ENCODE measurements at regions of chr6 and their contacts with region 1.

Region 1: DNA sequence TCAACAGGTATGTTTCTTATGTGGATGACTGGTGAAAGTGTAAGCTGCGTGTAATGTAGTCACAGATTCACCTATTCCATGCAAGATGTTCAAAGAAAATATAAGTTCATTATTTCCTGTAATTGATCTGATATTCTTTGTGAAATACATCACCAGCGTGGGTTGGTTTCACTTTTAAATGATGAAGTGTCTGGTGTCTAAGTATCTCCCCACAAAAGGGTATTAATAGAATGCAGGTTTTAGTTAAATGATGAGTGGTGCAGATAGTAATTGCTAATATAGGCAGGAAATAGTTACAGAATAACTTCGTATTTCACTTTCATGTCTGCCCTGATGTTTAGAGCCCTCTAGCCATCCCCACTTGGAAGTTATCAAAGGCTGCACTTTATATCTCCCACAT is 22.2 kb downstream of the PGBD1 start:
- DNase-seq: no peak
- ATAC-seq: no peak
- H3K4me3 ChIP-seq: no peak overlapping the region
- H3K27ac ChIP-seq: no peak overlapping the region
- H3K4me1 ChIP-seq: no peaks in the 10 kb centered on the region
- H3K27me3 ChIP-seq: no peaks in the 10 kb centered on the region
- CTCF ChIP-seq: no peak

Region 2: DNA sequence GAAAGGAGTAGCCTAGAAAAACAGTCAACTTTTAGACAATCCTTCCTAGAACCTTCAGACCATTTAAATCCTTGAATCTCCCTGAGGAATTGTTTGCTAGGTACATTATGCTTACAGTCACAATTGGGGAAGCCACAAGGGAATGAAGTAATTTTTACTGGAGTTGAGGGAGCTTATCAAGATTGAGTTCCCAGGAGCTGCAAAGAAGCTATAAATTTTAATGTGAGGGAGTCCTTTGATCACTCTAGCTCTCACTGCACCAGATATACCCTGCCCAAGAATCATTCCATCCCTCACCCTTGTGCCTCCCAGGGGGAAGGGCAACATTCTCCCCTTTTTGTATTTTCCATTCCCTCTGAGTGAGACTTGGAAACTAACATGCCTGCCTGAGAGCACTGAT is 235.5 kb before region 1 on chr6:
- CTCF ChIA-PET with region 1: no interaction called
- POLR2A ChIA-PET with region 1: no interaction called
- in situ Hi-C with region 1: no loop called
- intact Hi-C with region 1: no loop called
- DNase-seq: no peak
- ATAC-seq: no peak
- H3K4me3 ChIP-seq: no peak overlapping the region
- H3K27ac ChIP-seq: no peak overlapping the region
- H3K4me1 ChIP-seq: no peaks in the 10 kb centered on the region
- H3K27me3 ChIP-seq: peaks cover 43% of the 10 kb centered on the region
- CTCF ChIP-seq: no peak

Region 3: GRCh38 chr6:28281288-28282064 is 22.1 kb before region 1 on chr6 and contains the start of gene PGBD1:
- CTCF ChIA-PET with region 1: no interaction called
- POLR2A ChIA-PET with region 1: interaction called, 17 read pairs
- in situ Hi-C with region 1: no loop called
- intact Hi-C with region 1: no loop called
- DNase-seq: no peak
- ATAC-seq: peak; percentile 98
- H3K4me3 ChIP-seq: peak within 1 kb of the TSS; percentile 68 to 82
- H3K27ac ChIP-seq: peak within 1 kb of the TSS; percentile 89
- H3K4me1 ChIP-seq: peaks cover 7% of the 10 kb centered on the region; the same call in 1 of the 2 replicates
- H3K27me3 ChIP-seq: no peaks in the 10 kb centered on the region
- CTCF ChIP-seq: no peak
- total RNA-seq, gene PGBD1: 7.6 TPM

Measured in Panc1 (cell line).